ENCODE measurements at regions of chr15 and their contacts with region 1.

Region 1: DNA sequence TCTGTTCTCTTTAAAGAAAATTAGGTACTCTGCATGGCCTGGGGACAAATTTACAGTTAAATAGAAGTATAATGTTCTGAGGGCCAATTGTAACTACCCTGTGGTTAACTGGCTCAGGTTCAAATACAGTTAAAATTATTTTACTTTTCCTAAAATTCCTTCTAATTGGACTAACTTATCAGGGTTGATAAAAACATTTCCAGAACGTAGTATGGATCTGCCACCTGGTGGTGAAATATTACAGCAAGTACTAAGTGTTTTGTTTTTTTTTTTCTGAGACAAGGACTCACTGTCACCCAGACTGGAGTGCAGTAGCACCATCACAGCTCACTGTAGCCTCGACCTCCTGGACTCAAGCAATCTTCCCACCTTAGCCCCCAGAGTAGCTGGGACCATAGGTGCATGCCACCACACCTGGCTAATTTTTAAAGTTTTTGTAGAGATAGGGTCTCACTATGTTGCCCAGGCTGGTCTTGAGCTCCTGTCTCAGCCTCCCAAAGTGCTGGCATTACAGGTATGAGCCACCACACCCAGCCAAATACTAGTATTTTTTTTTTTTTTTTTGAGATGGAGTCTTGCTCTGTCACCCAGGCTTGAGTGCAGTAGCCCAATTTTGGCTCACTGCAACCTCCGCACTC is 29.2 kb downstream of the NEO1 start:
- DNase-seq: peak in 1 of 2 donors; percentile 82
- H3K4me3 ChIP-seq: no peak overlapping the region
- H3K27ac ChIP-seq: no peak overlapping the region
- H3K4me1 ChIP-seq: peaks cover 14 to 56% (median 43%) of the 10 kb centered on the region in 4 donors
- H3K27me3 ChIP-seq: no peaks in the 10 kb centered on the region
- CTCF ChIP-seq: peak in 5 of 7 experiments; percentile 43 to 75 (median 58)
- EP300 ChIP-seq: no peak
- POLR2A ChIP-seq: no peak

Region 2: GRCh38 chr15:72790302-72790910 is 291.0 kb before region 1 on chr15:
- intact Hi-C with region 1: loop called (anchors 5 kb)
- DNase-seq: no peak
- H3K4me3 ChIP-seq: no peak overlapping the region
- H3K27ac ChIP-seq: no peak overlapping the region
- H3K4me1 ChIP-seq: no peaks in the 10 kb centered on the region
- H3K27me3 ChIP-seq: peaks cover 0 to 3% (median 0%) of the 10 kb centered on the region in 3 donors
- CTCF ChIP-seq: no peak
- EP300 ChIP-seq: no peak
- POLR2A ChIP-seq: no peak

Measured in stomach (tissue), 19 donors.